ENCODE measurements at regions of chr7 and their contacts with region 1.

Region 1: DNA sequence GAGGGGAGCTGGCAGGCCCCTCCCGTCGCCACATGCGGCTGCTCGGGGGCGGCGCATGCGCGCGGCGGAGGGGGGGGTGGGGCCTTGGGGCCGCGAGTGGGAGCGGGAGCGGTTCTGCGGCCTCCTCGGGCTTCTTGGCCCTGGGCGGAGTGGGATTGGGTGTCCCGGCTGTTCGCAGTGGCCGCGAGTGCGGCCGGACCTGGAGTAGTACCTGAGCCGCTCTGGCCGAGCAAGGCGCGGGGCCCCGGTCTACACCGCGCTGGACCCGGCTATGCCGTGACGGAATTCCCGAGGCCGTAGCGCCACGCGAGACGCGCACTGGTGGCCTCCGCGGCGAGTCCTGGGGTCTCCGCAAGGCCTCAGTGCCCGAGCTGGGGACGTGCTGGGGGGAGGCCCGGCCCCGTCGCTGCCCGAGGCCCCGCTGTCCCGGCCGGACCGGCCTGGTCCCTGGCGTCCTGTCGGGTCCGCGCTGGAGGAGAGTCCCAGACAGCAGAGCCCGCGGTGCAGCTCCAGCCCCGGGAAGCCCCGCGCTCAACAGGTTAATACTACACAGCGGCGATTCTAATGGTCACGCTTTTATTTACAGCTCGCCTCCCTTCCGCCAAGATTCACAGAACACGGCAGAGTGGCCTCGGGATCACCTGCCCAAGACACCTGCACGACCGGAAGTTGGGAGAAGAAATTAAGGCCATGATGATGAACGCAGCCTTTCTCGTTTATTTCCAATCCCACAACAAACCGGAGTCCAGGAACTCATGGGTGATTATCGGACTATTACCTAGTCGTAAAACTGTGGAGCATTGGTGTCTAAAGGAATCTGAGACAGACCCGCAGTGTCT is 671 bp upstream of the PAXIP1 start:
- DNase-seq: no peak
- ATAC-seq: peak; percentile 77
- H3K4me3 Mint-ChIP-seq: peak overlapping the region; percentile 92
- H3K27ac Mint-ChIP-seq: peak overlapping the region; percentile 92
- H3K4me1 Mint-ChIP-seq: peaks cover 12% of the 10 kb centered on the region
- H3K27me3 Mint-ChIP-seq: no peaks in the 10 kb centered on the region

Region 2: GRCh38 chr7:154913638-154914312 is 89.8 kb before region 1 on chr7:
- POLR2A ChIA-PET with region 1: no interaction called
- DNase-seq: peak; percentile 91
- ATAC-seq: peak; percentile 97
- H3K4me3 Mint-ChIP-seq: peak overlapping the region; percentile 75
- H3K27ac Mint-ChIP-seq: peak overlapping the region; percentile 61
- H3K4me1 Mint-ChIP-seq: peaks cover 6% of the 10 kb centered on the region
- H3K27me3 Mint-ChIP-seq: peaks cover 14% of the 10 kb centered on the region

Region 3: DNA sequence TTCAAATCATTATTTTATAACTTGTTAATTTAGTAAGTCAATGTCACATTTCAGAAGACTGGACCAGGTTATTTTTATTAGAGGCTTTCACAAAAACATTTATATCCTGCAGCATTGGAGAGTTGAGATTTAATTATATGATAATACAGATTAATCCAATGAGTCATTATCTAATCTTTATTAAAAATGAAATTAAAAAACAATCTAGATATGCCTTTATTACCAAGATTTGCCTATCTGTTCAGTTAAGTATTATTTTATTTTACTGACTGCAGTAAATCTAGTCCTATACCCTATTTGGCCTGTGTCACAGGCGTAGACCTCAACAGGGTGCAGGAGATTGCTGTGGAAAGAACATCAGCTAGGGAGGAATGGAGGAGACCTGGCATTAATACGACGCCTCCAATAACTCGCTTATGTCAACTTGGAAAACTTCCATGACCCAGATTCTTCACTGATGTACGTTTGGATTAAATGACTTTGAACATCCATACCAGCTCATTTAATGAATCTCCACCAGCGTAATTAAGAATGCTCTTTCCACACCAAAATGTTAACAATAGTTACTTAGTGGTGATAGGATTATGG is 18.9 kb before region 1 on chr7:
- POLR2A ChIA-PET with region 1: interaction called, 10 read pairs
- DNase-seq: no peak
- ATAC-seq: no peak
- H3K4me3 Mint-ChIP-seq: no peak overlapping the region
- H3K27ac Mint-ChIP-seq: no peak overlapping the region
- H3K4me1 Mint-ChIP-seq: peaks cover 2% of the 10 kb centered on the region
- H3K27me3 Mint-ChIP-seq: no peaks in the 10 kb centered on the region

Measured in activated naive CD8-positive, alpha-beta T cell treated with anti-CD3 and anti-CD28 coated beads, Interleukin-2, amount 10 ng/mL, durations not matched to agents 7 days and 5 days (primary cell).